Activated T-helper 1 cell treated with anti-CD3 and anti-CD28 coated beads, Interleukin-12 subunit alpha, Interleukin-12 subunit beta, Interleukin-2, Interleukin-4 antibody, amounts not matched to agents 30 ng/mL and 10 ng/mL and 1 ng/mL, durations not matched to agents 14 hours and 24 hours and 36 hours (primary cell): ENCODE measurements at regions of chr17 and their contacts with region 1.

Region 1: GRCh38 chr17:8222630-8223356 is 12.4 kb upstream of the AURKB start:
- DNase-seq: peak; percentile 85
- H3K4me3 Mint-ChIP-seq: peak overlapping the region; percentile 97
- H3K27ac Mint-ChIP-seq: peak overlapping the region; percentile 98
- H3K4me1 Mint-ChIP-seq: peaks cover 70% of the 10 kb centered on the region
- H3K27me3 Mint-ChIP-seq: peaks cover 21% of the 10 kb centered on the region

Region 2: DNA sequence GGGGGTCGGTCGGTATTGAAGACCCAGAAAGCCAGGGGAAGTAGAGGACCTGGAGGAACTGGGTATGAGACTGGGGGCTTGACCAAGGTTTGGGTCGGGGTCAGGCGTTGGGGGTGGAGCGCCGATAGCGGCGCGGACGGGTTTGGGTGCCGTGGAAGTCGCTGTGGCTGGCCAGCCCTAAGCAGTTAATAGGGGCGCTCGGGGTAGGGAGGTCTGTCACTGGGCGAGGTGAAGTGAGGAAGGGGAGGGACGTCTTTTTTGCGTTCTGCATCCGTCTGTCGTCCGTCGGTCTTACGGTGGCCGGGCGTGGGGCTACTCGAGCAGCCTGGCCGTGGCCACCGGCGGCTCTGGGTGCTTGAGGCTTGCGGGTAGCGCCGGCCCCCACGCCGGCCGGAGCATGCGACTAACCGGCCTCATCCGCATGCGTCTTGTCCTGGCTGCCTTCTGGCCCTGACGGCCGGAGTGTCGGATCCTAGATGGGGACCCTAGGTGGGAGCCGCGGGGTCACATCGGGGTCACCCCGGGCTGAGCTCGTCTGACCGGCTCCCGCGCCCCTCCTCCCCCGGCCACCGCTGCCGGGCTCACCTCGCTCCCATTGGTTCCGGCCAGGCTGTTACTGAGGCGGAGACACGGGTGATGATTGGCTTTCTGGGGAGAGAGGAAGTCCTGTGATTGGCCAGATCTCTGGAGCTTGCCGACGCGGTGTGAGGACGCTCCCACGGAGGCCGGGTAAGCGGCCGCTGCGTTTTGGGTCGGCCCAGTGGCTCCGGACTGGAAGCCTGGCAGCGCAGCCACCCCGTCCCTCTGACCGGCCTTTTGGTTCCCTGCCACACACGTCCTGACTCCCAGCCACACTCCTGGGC is 378.3 kb before region 1 on chr17:
- intact Hi-C with region 1: loop called (anchors 2 kb)
- DNase-seq: peak; percentile 87
- H3K4me3 Mint-ChIP-seq: peak overlapping the region; percentile 89
- H3K27ac Mint-ChIP-seq: peak overlapping the region; percentile 96
- H3K4me1 Mint-ChIP-seq: peaks cover 37% of the 10 kb centered on the region
- H3K27me3 Mint-ChIP-seq: no peaks in the 10 kb centered on the region

Region 3: DNA sequence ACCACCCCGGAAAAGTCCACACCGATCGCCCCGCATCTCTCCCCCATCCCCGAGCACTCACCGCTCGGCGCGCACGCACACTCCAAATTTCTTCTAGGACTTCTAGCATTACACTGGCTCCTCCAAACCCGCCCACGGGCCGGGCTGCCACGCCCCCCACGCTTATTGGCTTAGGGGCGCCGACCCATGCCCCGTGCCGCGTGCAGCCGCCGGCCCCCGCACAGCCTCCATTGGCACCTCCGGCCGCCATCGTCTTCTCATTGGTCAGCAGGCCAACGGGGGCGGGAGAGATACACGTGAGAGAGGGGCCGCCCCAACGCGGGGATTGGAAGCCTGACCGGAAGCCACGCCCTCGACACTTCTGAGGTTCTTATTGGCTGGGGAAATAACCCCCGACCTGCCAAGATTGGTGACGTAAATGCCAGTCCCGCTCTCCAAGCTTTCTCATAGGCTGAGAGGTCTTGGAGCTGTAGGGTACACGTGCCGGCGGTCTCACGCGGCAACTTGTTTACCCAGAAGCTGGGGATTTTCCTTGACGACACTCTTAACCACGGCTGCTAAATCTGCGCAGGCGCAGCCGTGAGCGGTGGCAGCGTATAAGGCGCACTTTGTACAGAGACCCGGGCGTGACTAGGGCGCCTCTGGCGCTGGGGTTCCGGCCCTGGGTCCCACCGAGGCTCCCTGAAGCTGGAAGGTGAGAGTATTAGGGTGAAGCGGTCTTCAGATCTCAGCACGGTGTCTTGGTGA is 66.4 kb before region 1 on chr17:
- intact Hi-C with region 1: loop called (anchors 1 kb)
- DNase-seq: peak; percentile 100
- H3K4me3 Mint-ChIP-seq: no peak overlapping the region
- H3K27ac Mint-ChIP-seq: no peak overlapping the region
- H3K4me1 Mint-ChIP-seq: peaks cover 56% of the 10 kb centered on the region
- H3K27me3 Mint-ChIP-seq: no peaks in the 10 kb centered on the region

Region 4: DNA sequence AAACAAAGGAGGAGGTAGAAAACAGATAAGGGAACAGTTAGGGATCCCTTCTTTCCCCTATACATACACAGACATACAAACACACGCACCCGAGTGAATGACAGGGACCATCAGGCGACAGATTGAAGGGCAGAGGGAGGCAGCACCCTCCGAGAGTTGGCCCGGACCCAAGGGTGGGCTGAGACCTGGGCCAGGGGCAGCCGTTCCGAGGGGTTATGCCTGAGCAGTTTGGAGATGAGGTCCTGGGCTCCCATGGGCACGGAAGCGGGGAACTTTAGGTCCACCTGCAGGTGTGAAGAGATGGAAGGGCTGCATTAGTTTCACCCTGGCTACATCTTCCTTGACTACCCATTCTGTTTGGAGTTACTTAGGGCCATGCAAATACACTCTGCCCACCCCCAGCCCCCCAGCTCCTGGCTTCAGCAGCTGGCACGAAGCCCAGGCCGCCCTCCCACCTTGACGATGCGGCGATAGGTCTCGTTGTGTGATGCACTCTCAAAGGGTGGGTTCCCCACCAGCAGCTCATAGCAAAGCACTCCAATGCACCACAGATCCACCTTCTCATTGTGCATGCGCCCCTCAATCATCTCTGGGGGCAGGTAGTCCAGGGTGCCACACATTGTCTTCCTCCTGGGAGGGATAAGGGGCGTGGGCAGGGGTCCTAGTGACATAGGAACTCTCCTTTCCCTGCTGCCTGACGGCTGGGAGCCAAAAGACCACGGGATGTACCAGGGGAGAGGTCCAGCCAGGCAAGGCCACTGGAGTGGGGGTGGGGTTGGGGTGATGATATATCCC is 17.8 kb before region 1 on chr17:
- intact Hi-C with region 1: loop called (anchors 1 kb)
- DNase-seq: no peak
- H3K4me3 Mint-ChIP-seq: no peak overlapping the region
- H3K27ac Mint-ChIP-seq: no peak overlapping the region
- H3K4me1 Mint-ChIP-seq: peaks cover 26% of the 10 kb centered on the region
- H3K27me3 Mint-ChIP-seq: no peaks in the 10 kb centered on the region

Region 5: DNA sequence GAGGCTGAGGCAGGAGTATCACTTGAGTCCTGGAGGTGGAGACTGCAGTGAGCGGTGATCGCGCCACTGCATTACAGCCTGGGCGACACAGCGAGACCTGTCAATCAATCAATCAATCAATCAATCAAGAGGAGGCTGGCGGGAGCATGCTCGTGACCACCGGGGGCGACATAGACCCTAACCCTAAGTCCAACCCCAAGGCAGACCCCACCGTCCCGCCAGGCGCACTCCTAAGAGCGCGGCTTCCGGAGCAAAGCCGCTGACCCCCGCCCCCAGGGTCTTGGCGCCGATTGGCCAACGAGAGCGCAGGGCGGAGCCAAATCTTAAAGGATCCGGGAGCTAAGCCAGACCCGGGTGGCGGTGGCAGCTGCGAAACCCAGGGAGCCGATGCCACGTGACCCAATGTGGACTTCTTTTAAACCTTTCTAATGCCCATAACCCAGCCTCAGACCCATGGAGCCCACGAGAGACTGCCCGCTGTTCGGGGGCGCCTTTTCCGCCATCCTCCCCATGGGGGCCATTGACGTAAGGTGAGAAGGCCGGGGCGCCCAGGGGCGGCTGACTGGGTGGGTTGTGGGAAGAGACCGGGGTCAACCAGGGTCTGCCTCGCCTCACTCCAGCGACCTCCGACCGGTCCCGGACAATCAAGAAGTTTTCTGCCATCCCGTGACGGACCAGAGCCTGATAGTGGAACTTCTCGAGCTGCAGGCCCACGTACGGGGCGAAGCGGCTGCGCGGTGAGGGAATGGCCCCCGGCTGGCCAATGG is 65.7 kb after region 1 on chr17 and contains the start of gene RANGRF:
- intact Hi-C with region 1: loop called (anchors 1 kb)
- DNase-seq: peak; percentile 85
- H3K4me3 Mint-ChIP-seq: peak within 1 kb of the TSS; percentile 86
- H3K27ac Mint-ChIP-seq: peak within 1 kb of the TSS; percentile 92
- H3K4me1 Mint-ChIP-seq: peaks cover 37% of the 10 kb centered on the region
- H3K27me3 Mint-ChIP-seq: no peaks in the 10 kb centered on the region
- total RNA-seq, gene RANGRF: 52.9 and 57.9 TPM in 2 replicates

Region 6: GRCh38 chr17:8552577-8553320 is 330.0 kb after region 1 on chr17:
- intact Hi-C with region 1: no loop called
- DNase-seq: no peak
- H3K4me3 Mint-ChIP-seq: no peak overlapping the region
- H3K27ac Mint-ChIP-seq: no peak overlapping the region
- H3K4me1 Mint-ChIP-seq: no peaks in the 10 kb centered on the region
- H3K27me3 Mint-ChIP-seq: peaks cover 7% of the 10 kb centered on the region

Region 7: GRCh38 chr17:8745586-8746500 is 523.0 kb after region 1 on chr17:
- intact Hi-C with region 1: loop called (anchors 10 kb)
- DNase-seq: peak; percentile 63
- H3K4me3 Mint-ChIP-seq: peak overlapping the region; percentile 87
- H3K27ac Mint-ChIP-seq: peak overlapping the region; percentile 75
- H3K4me1 Mint-ChIP-seq: peaks cover 13% of the 10 kb centered on the region
- H3K27me3 Mint-ChIP-seq: peaks cover 6% of the 10 kb centered on the region